ENCODE measurements at regions of chr19 and their contacts with region 1.

Region 1: DNA sequence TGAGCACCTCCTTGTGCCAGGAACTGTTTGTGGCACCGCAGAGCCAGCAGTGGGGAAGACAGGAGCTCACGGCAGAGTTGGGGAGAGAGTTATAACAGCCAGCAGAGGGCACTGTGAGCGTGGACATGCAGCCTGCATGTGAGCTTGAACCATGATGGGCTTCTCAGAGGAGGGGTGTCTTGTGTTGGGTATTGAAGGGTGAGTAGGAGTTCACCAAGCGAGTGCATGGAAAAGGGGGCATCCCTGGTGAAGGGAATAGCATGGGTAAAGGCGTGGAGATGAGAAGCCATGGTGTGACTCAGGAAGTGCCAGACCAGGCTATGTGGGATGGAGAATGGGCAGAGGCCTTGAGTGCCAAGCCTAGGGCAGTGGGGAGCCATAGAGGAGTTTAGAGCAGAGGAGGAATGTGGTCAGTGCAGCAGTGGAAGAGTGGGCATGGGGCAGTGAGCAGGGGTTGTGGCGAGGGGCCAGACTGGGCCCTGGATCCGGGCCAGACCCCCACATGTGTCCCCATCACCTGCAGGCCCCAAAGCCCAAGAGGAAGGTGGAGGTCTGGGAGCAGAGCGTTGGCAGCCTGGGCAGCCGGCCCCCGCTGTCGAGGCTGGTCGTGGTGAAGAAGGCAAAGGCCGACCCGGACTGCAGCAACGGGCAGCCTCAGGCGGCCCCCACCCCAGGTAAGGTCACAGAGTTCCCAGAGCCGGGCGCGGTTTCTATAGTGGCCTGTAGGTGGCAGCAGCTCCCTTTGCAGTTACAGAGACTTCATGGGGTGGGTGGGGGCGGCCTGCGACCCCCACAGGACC is 11.8 kb upstream of the SHD start:
- DNase-seq: peak; percentile 88
- ATAC-seq: peak; percentile 93
- H3K4me3 Mint-ChIP-seq: no peak overlapping the region
- H3K27ac Mint-ChIP-seq: 0 out of 2 replicates have a peak overlapping the region, but pooled peaks have one; percentile 5
- H3K4me1 Mint-ChIP-seq: no peaks in the 10 kb centered on the region; the same call in 1 of the 2 replicates
- H3K27me3 Mint-ChIP-seq: no peaks in the 10 kb centered on the region
- CTCF ChIP-seq: peak; percentile 86

Region 2: DNA sequence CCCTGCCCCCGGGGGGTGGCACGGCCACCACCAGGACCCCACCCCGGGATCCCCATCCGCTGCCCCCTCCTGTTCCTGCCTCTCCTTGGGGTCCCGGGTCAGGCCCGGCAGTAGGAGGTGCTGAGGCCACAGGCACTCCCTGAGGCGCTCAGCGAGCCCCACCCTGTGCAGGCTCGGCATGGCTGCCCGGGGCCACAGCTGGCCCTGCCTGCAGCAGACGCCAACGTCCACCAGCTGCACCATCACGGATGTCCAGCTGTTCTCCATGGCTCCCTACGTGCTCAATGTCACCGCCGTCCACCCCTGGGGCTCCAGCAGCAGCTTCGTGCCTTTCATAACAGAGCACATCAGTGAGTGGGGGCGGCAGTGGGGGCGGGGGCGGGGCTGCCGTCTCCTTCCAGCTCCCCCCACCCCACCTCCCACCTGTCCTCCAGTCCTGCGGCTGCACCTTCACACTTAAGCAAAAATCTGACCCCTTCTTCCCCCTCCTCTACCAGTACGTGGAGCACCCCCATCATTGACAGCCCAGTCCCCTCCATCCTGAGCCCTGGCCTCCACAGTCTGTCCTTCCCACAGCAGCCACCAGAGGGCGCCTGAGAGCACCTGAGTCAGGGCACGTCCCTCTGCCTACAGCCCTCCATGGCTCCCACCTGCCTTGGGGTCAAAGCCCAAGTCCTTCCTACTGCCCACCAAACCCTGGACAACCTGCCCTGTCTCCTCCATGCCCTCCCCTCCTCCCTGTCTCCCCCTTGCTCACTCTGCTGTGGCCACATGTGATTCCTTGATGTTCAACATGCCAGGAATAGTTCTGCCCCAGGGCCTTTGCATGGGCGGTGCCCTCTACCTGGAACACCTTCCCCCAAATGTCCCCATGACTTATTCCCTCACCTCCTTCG is 34.1 kb before region 1 on chr19:
- CTCF ChIA-PET with region 1: interaction called, 14 read pairs
- POLR2A ChIA-PET with region 1: interaction called, 7 read pairs
- DNase-seq: peak; percentile 84
- ATAC-seq: peak; percentile 77
- H3K4me3 Mint-ChIP-seq: no peak overlapping the region
- H3K27ac Mint-ChIP-seq: no peak overlapping the region
- H3K4me1 Mint-ChIP-seq: no peaks in the 10 kb centered on the region
- H3K27me3 Mint-ChIP-seq: no peaks in the 10 kb centered on the region; the same call in 1 of the 2 replicates
- CTCF ChIP-seq: peak; percentile 82

Region 3: DNA sequence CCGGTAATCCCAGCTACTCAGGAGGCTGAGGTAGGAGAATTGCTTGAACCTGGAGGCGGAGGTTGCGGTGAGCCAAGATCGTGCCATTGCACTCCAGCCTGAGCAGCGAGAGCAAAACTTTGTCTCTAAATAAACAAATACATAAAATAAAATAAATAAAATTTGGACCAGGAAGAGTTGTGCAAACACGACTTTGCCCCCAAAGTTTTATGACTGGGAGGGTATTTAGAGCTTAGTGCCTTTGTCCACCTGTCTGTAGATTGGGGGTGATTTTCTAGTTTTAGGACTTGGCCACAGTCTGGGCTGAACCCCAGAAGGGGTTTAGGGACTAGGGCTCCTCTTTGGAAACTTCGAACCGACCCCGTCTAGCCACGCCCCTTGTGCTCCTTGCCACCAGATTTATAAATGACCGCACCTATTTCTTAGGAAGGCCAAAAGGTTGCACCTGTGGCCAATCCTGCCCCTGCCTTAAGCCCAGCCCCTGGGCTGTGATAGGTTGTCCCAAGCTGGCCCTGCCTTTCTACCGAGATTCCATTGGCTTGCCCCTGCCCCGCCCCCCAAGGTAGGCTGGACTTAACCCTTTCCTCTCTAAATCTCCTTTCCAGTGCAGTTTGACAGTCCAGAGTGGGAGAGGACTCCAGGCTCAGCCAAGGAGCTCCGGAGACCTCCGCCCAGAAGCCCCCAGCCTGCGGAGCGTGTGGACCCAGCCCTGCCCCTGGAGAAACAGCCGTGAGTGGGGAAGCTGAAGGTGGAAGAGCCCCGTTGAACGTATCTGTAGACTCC is 17.1 kb after region 1 on chr19:
- CTCF ChIA-PET with region 1: interaction called, 172 read pairs
- POLR2A ChIA-PET with region 1: no interaction called
- DNase-seq: peak; percentile 91
- ATAC-seq: peak; percentile 99
- H3K4me3 Mint-ChIP-seq: peak overlapping the region; percentile 58
- H3K27ac Mint-ChIP-seq: no peak overlapping the region
- H3K4me1 Mint-ChIP-seq: peaks cover 2% of the 10 kb centered on the region; the same call in 1 of the 2 replicates
- H3K27me3 Mint-ChIP-seq: peaks cover 56% of the 10 kb centered on the region
- CTCF ChIP-seq: no peak

Region 4: DNA sequence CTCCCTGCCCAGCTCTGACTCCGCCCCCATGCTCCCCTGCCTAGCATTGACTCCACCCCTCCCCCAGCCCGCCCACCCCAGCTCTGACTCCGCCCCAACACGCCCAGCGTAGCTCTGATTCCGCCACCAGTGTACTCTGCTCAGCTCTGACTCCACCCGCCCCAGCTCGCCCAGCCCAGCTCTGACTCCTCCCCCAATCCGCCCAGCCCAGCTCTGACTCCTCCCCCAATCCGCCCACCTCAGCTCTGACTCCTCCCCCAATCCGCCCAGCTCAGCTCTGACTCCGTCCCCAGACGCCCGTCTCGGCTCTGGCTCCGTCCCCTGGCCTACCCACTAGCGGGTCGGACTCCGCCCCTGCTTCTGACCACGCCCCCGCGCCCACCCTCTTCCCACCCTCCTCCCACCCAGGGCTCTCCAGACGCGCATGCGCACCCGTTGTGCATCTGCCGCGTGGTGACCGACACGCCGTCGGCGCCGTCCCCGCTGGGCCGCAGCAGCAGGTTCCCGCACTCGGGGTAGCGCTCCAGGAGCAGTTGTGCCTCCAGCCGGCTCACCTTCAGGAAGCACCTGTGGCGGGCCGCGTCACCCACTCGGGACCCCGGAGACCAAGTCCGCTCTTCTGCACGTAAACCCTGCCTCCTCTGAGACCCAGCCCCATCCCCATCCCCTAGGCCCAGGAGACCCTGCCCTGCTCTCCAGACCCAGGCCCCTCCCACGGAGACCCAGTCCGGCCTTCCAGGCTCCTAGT is 61.1 kb after region 1 on chr19:
- CTCF ChIA-PET with region 1: interaction called, 35 read pairs
- POLR2A ChIA-PET with region 1: no interaction called
- DNase-seq: peak; percentile 98
- ATAC-seq: peak; percentile 68
- H3K4me3 Mint-ChIP-seq: peak overlapping the region; percentile 76
- H3K27ac Mint-ChIP-seq: no peak overlapping the region
- H3K4me1 Mint-ChIP-seq: peaks cover 12% of the 10 kb centered on the region
- H3K27me3 Mint-ChIP-seq: peaks cover 3% of the 10 kb centered on the region
- CTCF ChIP-seq: no peak

Region 5: GRCh38 chr19:4369888-4370260 is 102.6 kb after region 1 on chr19:
- CTCF ChIA-PET with region 1: interaction called, 47 read pairs
- POLR2A ChIA-PET with region 1: no interaction called
- DNase-seq: peak; percentile 63
- ATAC-seq: peak; percentile 69
- H3K4me3 Mint-ChIP-seq: no peak overlapping the region
- H3K27ac Mint-ChIP-seq: peak overlapping the region; percentile 88; the same call in 1 of the 2 replicates
- H3K4me1 Mint-ChIP-seq: peaks cover 21% of the 10 kb centered on the region
- H3K27me3 Mint-ChIP-seq: no peaks in the 10 kb centered on the region
- CTCF ChIP-seq: no peak

Region 6: GRCh38 chr19:4415352-4415751 is 148.1 kb after region 1 on chr19:
- CTCF ChIA-PET with region 1: interaction called, 12 read pairs
- POLR2A ChIA-PET with region 1: no interaction called
- DNase-seq: no peak
- ATAC-seq: peak; percentile 47
- H3K4me3 Mint-ChIP-seq: peak overlapping the region; percentile 20
- H3K27ac Mint-ChIP-seq: peak overlapping the region; percentile 90
- H3K4me1 Mint-ChIP-seq: peaks cover 45% of the 10 kb centered on the region
- H3K27me3 Mint-ChIP-seq: no peaks in the 10 kb centered on the region
- CTCF ChIP-seq: no peak

Region 7: GRCh38 chr19:4464815-4465581 is 197.7 kb after region 1 on chr19:
- CTCF ChIA-PET with region 1: no interaction called
- POLR2A ChIA-PET with region 1: no interaction called
- DNase-seq: no peak
- ATAC-seq: no peak
- H3K4me3 Mint-ChIP-seq: no peak overlapping the region
- H3K27ac Mint-ChIP-seq: no peak overlapping the region
- H3K4me1 Mint-ChIP-seq: no peaks in the 10 kb centered on the region
- H3K27me3 Mint-ChIP-seq: peaks cover 13% of the 10 kb centered on the region
- CTCF ChIP-seq: no peak